ENCODE measurements at regions of chr13 and their contacts with region 1.

Region 1: GRCh38 chr13:48492470-48493065 is 40.3 kb downstream of the RCBTB2 start:
- DNase-seq: peak; percentile 90
- ATAC-seq: peak; percentile 85
- H3K4me3 Mint-ChIP-seq: no peak overlapping the region
- H3K27ac Mint-ChIP-seq: no peak overlapping the region
- H3K4me1 Mint-ChIP-seq: peaks cover 61% of the 10 kb centered on the region
- H3K27me3 Mint-ChIP-seq: no peaks in the 10 kb centered on the region

Region 2: DNA sequence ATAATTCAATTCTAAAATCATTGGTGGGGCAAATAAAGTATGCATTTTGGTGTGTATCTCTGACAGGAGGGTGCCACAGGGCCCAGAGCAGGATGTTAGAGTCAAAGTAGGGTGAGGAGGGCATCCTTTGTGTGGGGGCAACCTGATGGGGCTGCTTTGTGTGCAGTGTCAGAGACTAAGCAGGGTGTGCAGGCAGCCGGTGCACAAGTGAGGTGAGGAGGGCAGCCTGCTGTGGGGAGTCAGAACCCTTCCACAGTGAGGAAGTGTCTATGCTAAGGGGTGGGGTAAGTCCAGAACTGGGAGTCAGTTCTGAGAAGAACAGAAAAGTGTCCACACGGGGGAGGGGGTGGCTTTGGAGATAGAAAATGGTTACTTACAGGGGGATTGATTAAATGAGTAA is 148.3 kb before region 1 on chr13:
- CTCF ChIA-PET with region 1: no interaction called
- POLR2A ChIA-PET with region 1: no interaction called
- DNase-seq: no peak
- ATAC-seq: no peak
- H3K4me3 Mint-ChIP-seq: no peak overlapping the region
- H3K27ac Mint-ChIP-seq: peak overlapping the region; percentile 1
- H3K4me1 Mint-ChIP-seq: peaks cover 20% of the 10 kb centered on the region
- H3K27me3 Mint-ChIP-seq: no peaks in the 10 kb centered on the region

Region 3: DNA sequence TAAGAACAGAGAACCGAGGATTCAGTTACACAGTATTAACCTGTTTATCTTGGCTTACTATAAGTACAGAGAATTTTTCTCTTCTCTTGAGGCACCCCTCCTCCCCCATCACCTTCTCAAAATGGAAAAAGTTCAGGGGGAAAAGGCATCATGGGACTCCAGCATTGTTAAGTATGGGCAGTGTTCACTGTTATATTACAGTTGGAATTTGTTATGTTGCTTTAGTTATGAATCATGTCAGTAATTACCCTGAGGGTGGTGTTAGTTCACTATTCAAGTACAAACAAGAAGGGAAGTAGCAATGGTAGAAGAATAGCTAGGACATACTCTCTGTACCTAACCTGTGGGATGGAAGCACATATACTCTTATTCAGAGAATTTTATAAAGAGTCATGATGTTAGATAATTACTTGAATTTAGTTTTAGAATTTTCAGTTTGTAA is 91.7 kb before region 1 on chr13:
- CTCF ChIA-PET with region 1: interaction called, 6 read pairs
- POLR2A ChIA-PET with region 1: interaction called, 10 read pairs
- DNase-seq: no peak
- ATAC-seq: peak; percentile 62
- H3K4me3 Mint-ChIP-seq: peak overlapping the region; percentile 44
- H3K27ac Mint-ChIP-seq: peak overlapping the region; percentile 71
- H3K4me1 Mint-ChIP-seq: peaks cover 64% of the 10 kb centered on the region
- H3K27me3 Mint-ChIP-seq: no peaks in the 10 kb centered on the region

Region 4: DNA sequence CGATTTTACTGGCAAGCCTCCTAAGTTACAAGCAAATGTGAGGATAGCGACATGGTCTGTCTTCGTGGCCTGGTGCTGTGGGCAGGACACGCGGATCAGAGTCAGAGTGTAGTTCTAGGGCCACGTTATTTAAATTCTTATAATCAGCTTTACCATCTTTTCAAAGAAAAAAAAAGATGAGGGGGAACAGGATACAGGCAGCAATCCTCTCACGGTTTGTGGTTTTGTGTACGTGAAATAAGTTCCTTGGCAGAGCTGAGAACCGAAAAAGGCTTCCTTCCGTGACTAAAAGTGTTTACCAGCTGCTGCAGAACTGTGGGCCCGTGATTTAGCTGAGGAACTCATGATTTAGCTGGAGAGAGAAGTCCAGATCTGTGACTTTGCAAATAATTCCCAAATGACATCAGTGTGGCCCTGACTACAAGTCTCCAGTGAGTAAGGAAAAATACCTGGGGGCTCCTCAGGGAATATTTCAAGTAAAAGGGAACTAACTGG is 13.1 kb after region 1 on chr13:
- CTCF ChIA-PET with region 1: interaction called, 9 read pairs
- POLR2A ChIA-PET with region 1: interaction called, 11 read pairs
- DNase-seq: peak; percentile 84
- ATAC-seq: peak; percentile 84
- H3K4me3 Mint-ChIP-seq: peak overlapping the region; percentile 50
- H3K27ac Mint-ChIP-seq: peak overlapping the region; percentile 90
- H3K4me1 Mint-ChIP-seq: peaks cover 90% of the 10 kb centered on the region
- H3K27me3 Mint-ChIP-seq: no peaks in the 10 kb centered on the region

Region 5: GRCh38 chr13:48539550-48539949 is 47.0 kb after region 1 on chr13:
- CTCF ChIA-PET with region 1: no interaction called
- POLR2A ChIA-PET with region 1: no interaction called
- DNase-seq: no peak
- ATAC-seq: no peak
- H3K4me3 Mint-ChIP-seq: no peak overlapping the region
- H3K27ac Mint-ChIP-seq: no peak overlapping the region
- H3K4me1 Mint-ChIP-seq: peaks cover 21% of the 10 kb centered on the region
- H3K27me3 Mint-ChIP-seq: no peaks in the 10 kb centered on the region

Region 6: GRCh38 chr13:48653472-48653939 is 160.9 kb after region 1 on chr13 and contains the start of gene CYSLTR2:
- CTCF ChIA-PET with region 1: no interaction called
- POLR2A ChIA-PET with region 1: no interaction called
- DNase-seq: peak; percentile 48
- ATAC-seq: peak; percentile 89
- H3K4me3 Mint-ChIP-seq: peak within 1 kb of the TSS; percentile 71
- H3K27ac Mint-ChIP-seq: peak within 1 kb of the TSS; percentile 73
- H3K4me1 Mint-ChIP-seq: peaks cover 26% of the 10 kb centered on the region
- H3K27me3 Mint-ChIP-seq: no peaks in the 10 kb centered on the region
- total RNA-seq, gene CYSLTR2: 2.9 to 3.3 TPM